Activated CD4-positive, alpha-beta T cell treated with anti-CD3 and anti-CD28 coated beads, Interleukin-2, amount 10 ng/mL, durations not matched to agents 24 days and 14 days (primary cell): ENCODE measurements at regions of chr2 and their contacts with region 1.

Region 1: GRCh38 chr2:225010804-225011203 is 31.5 kb downstream of the DOCK10 start:
- DNase-seq: no peak
- H3K4me3 Mint-ChIP-seq: peak overlapping the region; percentile 41
- H3K27ac Mint-ChIP-seq: peak overlapping the region; percentile 89
- H3K4me1 Mint-ChIP-seq: peaks cover 63% of the 10 kb centered on the region
- H3K27me3 Mint-ChIP-seq: no peaks in the 10 kb centered on the region

Region 2: GRCh38 chr2:224894356-224894755 is 116.4 kb before region 1 on chr2:
- intact Hi-C with region 1: no loop called
- DNase-seq: peak; percentile 67
- H3K4me3 Mint-ChIP-seq: peak overlapping the region; percentile 69
- H3K27ac Mint-ChIP-seq: peak overlapping the region; percentile 89
- H3K4me1 Mint-ChIP-seq: peaks cover 56% of the 10 kb centered on the region
- H3K27me3 Mint-ChIP-seq: no peaks in the 10 kb centered on the region

Region 3: DNA sequence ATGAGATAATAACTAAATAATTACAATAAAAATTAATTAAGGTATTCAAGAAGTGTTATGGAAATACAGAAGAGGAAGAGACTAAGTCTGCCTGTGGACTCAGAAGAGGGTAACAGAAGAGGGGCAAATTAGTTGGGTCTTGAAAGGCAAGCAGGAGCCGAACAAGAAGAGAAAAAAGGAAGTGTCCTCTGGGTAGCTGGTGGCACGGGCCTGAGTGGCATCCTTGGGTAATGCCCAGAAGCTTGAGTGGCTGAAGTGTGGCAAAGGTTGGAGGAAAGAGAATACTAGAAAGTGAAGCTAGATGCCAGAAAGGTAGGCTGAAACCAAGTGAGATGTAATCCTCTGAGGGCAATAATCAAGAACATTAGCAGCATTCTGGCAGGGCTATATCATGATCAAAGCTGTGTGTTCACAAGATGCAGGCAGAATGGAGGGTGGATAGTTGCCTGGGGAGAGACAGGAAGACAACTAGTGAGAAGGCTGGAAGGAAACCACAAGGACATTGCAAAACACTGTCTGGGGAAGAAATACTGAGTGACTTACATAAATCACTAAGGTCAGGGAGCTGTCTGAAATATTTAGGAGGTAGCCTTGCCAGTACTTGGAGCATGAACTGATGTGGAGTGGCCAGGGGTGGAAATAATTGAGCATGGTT is 15.2 kb after region 1 on chr2:
- intact Hi-C with region 1: loop called (anchors 2 kb)
- DNase-seq: peak; percentile 69
- H3K4me3 Mint-ChIP-seq: peak overlapping the region; percentile 26
- H3K27ac Mint-ChIP-seq: peak overlapping the region; percentile 42
- H3K4me1 Mint-ChIP-seq: peaks cover 56% of the 10 kb centered on the region
- H3K27me3 Mint-ChIP-seq: no peaks in the 10 kb centered on the region